ENCODE measurements at regions of chr11 and their contacts with region 1.

Region 1: DNA sequence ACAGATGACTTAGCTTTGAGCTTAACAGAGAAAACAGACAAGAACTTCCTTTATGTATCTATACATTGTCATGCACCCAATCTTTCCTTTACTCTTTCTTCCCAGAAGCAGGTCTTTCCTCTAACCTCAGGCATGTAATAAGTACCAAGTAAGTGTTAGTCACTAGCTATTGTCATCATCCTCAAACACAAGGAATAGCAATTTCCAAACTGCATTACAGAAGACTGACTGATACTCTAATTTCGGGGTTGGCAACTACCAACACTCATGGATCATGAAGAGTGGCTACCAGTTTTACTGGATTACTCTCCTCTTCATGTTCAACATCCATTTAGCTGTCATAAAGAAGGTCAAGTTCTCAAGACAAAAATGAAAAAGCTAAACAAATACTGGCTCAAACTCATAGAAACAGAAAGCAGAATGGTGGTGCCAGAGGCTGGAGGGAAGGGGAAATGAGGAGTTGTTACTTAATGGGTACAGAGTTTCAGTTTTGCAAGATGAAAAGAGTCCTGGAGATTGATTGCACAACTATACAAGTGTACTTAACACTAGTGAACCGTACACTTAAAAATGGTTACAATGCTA is 111.6 kb downstream of the SIK3 start:
- DNase-seq: peak; percentile 42
- H3K4me3 Mint-ChIP-seq: peak overlapping the region; percentile 63
- H3K27ac Mint-ChIP-seq: peak overlapping the region; percentile 92
- H3K4me1 Mint-ChIP-seq: peaks cover 77% of the 10 kb centered on the region
- H3K27me3 Mint-ChIP-seq: no peaks in the 10 kb centered on the region

Region 2: GRCh38 chr11:116397602-116398084 is 589.0 kb before region 1 on chr11:
- CTCF ChIA-PET with region 1: no interaction called
- POLR2A ChIA-PET with region 1: no interaction called
- intact Hi-C with region 1: no loop called
- DNase-seq: no peak
- H3K4me3 Mint-ChIP-seq: no peak overlapping the region
- H3K27ac Mint-ChIP-seq: no peak overlapping the region
- H3K4me1 Mint-ChIP-seq: no peaks in the 10 kb centered on the region
- H3K27me3 Mint-ChIP-seq: peaks cover 1% of the 10 kb centered on the region

Region 3: GRCh38 chr11:116879800-116880625 is 106.6 kb before region 1 on chr11:
- CTCF ChIA-PET with region 1: interaction called, 8 read pairs
- POLR2A ChIA-PET with region 1: no interaction called
- intact Hi-C with region 1: loop called (anchors 1 kb)
- DNase-seq: no peak
- H3K4me3 Mint-ChIP-seq: no peak overlapping the region
- H3K27ac Mint-ChIP-seq: no peak overlapping the region
- H3K4me1 Mint-ChIP-seq: peaks cover 28% of the 10 kb centered on the region
- H3K27me3 Mint-ChIP-seq: no peaks in the 10 kb centered on the region

Region 4: DNA sequence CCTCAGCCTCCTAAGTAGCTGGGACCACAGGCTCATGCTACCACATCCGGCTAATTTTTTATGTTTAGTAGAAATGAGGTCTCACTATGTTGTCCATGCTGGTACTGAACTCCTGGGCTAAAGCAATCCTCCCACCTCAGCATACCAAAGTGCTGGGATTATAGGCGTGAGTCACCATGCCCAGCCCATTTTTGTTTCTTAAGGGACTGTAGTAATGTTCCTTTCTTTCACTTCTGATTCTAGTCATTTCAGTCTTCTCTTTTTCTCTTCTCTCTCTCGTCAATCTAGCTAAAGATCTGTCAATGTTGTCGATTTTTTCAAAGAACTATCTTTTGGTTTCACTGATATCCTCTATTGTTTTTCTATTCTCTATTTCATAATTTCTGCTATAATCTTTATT is 38.2 kb before region 1 on chr11:
- CTCF ChIA-PET with region 1: no interaction called
- POLR2A ChIA-PET with region 1: interaction called, 4 read pairs
- intact Hi-C with region 1: loop called (anchors 1 kb)
- DNase-seq: peak; percentile 68
- H3K4me3 Mint-ChIP-seq: no peak overlapping the region
- H3K27ac Mint-ChIP-seq: no peak overlapping the region
- H3K4me1 Mint-ChIP-seq: peaks cover 41% of the 10 kb centered on the region
- H3K27me3 Mint-ChIP-seq: no peaks in the 10 kb centered on the region

Region 5: GRCh38 chr11:117010808-117011540 is 24.4 kb after region 1 on chr11:
- CTCF ChIA-PET with region 1: interaction called, 8 read pairs
- POLR2A ChIA-PET with region 1: interaction called, 25 read pairs
- intact Hi-C with region 1: loop called (anchors 1 kb)
- DNase-seq: no peak
- H3K4me3 Mint-ChIP-seq: no peak overlapping the region
- H3K27ac Mint-ChIP-seq: peak overlapping the region; percentile 84
- H3K4me1 Mint-ChIP-seq: peaks cover 51% of the 10 kb centered on the region
- H3K27me3 Mint-ChIP-seq: no peaks in the 10 kb centered on the region

Region 6: GRCh38 chr11:117026593-117027330 is 40.1 kb after region 1 on chr11:
- CTCF ChIA-PET with region 1: interaction called, 9 read pairs
- POLR2A ChIA-PET with region 1: interaction called, 18 read pairs
- intact Hi-C with region 1: loop called (anchors 1 kb)
- DNase-seq: no peak
- H3K4me3 Mint-ChIP-seq: peak overlapping the region; percentile 13
- H3K27ac Mint-ChIP-seq: peak overlapping the region; percentile 79
- H3K4me1 Mint-ChIP-seq: peaks cover 69% of the 10 kb centered on the region
- H3K27me3 Mint-ChIP-seq: no peaks in the 10 kb centered on the region

Region 7: GRCh38 chr11:117064275-117064674 is 77.7 kb after region 1 on chr11:
- CTCF ChIA-PET with region 1: interaction called, 3 read pairs
- POLR2A ChIA-PET with region 1: interaction called, 12 read pairs
- intact Hi-C with region 1: loop called (anchors 1 kb)
- DNase-seq: no peak
- H3K4me3 Mint-ChIP-seq: peak overlapping the region; percentile 34
- H3K27ac Mint-ChIP-seq: peak overlapping the region; percentile 81
- H3K4me1 Mint-ChIP-seq: peaks cover 79% of the 10 kb centered on the region
- H3K27me3 Mint-ChIP-seq: no peaks in the 10 kb centered on the region

Region 8: DNA sequence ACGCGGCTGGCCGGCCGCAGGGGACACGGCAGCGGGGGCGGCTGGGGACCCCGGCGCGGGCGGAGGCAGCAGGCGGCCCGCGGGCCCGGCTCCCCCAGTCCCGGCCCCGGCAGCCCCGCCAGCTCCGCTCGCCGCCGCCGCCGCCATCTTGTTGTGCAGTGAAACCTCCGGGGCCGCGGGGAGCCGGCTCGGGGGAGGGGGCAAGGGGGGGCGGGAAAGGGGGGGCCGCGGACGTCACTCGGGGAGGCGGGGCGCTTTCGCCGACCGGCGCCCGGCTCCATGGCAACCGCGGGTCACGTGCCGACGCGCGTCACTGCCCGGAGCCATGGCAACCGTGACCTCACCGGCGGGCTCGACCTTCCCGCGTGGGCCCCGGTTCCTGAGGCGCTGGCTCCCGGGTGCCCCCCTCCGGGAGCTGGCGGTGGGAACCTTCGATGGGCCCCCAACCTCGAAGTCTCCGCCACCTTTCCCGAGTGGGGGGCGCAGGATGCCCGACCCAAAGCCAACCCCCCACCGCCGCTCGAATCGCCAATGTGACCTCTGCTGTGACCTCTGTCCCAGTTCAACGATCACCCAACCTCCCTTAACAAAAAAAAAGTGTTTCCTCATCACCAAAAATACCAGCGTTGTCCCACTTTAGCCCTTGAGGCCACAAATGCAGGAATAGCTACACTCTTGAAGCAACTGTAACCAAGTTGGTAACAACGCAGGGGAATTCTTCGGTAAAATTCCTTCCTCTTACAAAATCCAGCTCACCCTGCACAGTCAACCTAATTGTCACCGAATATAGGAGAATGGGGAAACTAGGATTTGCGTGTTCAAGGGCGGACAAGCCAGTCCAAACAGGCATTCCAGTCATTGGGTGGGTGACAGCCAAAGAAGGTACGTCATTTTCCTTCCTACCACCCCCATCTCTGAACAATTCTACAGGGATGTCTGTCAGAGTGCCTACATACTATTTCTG is 111.9 kb after region 1 on chr11 and contains the start of gene SIK3:
- CTCF ChIA-PET with region 1: interaction called, 5 read pairs
- POLR2A ChIA-PET with region 1: interaction called, 20 read pairs
- intact Hi-C with region 1: loop called (anchors 1 kb)
- DNase-seq: peak; percentile 94
- H3K4me3 Mint-ChIP-seq: peak within 1 kb of the TSS; percentile 88
- H3K27ac Mint-ChIP-seq: peak within 1 kb of the TSS; percentile 91
- H3K4me1 Mint-ChIP-seq: peaks cover 43% of the 10 kb centered on the region
- H3K27me3 Mint-ChIP-seq: no peaks in the 10 kb centered on the region
- total RNA-seq, gene SIK3: 26.1 to 26.2 TPM